MCF 10A (cell line): ENCODE measurements at regions of chr1 and their contacts with region 1.

Region 1: DNA sequence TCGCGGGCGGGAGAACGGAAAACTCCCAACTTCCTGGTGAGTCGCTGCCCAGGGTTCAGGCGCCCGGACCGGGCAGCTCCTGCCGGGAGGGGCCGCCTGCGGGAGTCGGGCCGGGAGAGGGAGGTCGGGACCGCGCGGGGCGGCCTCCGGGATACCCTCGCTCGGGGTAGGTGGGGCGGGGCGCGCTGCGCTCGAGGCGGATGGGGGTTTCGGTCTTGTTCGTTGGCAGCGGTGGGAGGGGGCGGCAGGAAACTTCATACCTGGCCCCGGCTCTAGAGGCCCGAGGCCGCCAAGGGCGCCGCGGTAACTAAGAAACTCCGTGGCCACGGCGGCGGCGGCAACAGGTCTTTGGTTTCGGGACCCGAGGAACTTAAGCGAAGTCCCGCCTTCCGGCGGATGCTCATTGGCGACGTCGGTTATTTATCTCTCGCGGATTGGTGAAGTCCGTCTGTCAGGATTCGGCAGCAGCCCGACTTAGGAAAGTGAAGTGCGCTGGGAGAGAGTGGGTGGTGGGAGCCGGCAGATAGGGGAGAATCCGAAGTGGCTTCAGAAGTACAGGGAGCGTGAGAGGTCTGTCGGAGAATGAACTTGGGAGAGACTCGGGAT is 546 bp downstream of the NEK7 start:
- DNase-seq: peak; percentile 98
- H3K4me3 Mint-ChIP-seq: peak overlapping the region; percentile 85
- H3K27ac Mint-ChIP-seq: peak overlapping the region; percentile 86
- H3K4me1 Mint-ChIP-seq: peaks cover 42% of the 10 kb centered on the region
- H3K27me3 Mint-ChIP-seq: no peaks in the 10 kb centered on the region
- CTCF ChIP-seq: no peak

Region 2: DNA sequence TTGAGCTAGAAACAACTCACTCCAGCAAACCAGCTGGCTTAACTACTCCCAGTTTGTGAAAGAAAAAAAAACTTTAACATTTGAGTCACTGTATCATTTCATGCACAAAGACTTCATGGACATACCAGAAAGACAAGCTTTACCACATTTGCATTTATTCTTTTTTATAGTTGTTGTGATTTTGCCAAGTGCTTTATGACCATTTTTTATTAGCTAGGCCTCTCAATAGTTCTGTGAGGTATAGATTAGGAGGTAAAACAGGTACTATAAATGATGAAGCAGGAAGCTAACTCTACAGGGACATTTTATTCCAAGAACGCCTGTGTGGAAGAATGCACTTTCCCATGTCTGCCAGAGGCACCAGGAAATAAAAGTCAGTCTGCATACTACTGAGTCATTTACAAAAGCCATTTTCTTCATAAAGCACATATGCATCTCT is 373.8 kb before region 1 on chr1:
- CTCF ChIA-PET with region 1: no interaction called
- POLR2A ChIA-PET with region 1: no interaction called
- intact Hi-C with region 1: loop called (anchors 2 kb)
- DNase-seq: no peak
- H3K4me3 Mint-ChIP-seq: no peak overlapping the region
- H3K27ac Mint-ChIP-seq: peak overlapping the region; percentile 52
- H3K4me1 Mint-ChIP-seq: peaks cover 43% of the 10 kb centered on the region
- H3K27me3 Mint-ChIP-seq: no peaks in the 10 kb centered on the region
- CTCF ChIP-seq: no peak

Region 3: GRCh38 chr1:198064201-198064600 is 93.1 kb before region 1 on chr1:
- CTCF ChIA-PET with region 1: interaction called, 3 read pairs
- POLR2A ChIA-PET with region 1: interaction called, 12 read pairs
- intact Hi-C with region 1: no loop called
- DNase-seq: peak; percentile 51
- H3K4me3 Mint-ChIP-seq: no peak overlapping the region
- H3K27ac Mint-ChIP-seq: peak overlapping the region; percentile 80
- H3K4me1 Mint-ChIP-seq: peaks cover 7% of the 10 kb centered on the region
- H3K27me3 Mint-ChIP-seq: no peaks in the 10 kb centered on the region
- CTCF ChIP-seq: no peak

Region 4: GRCh38 chr1:198212637-198213036 is 55.3 kb after region 1 on chr1:
- CTCF ChIA-PET with region 1: interaction called, 3 read pairs
- POLR2A ChIA-PET with region 1: interaction called, 6 read pairs
- intact Hi-C with region 1: loop called (anchors 2 kb)
- DNase-seq: peak; percentile 89
- H3K4me3 Mint-ChIP-seq: no peak overlapping the region
- H3K27ac Mint-ChIP-seq: peak overlapping the region; percentile 5
- H3K4me1 Mint-ChIP-seq: peaks cover 22% of the 10 kb centered on the region
- H3K27me3 Mint-ChIP-seq: no peaks in the 10 kb centered on the region
- CTCF ChIP-seq: no peak

Region 5: GRCh38 chr1:198275597-198275996 is 118.3 kb after region 1 on chr1:
- CTCF ChIA-PET with region 1: interaction called, 4 read pairs
- POLR2A ChIA-PET with region 1: interaction called, 54 read pairs
- intact Hi-C with region 1: loop called (anchors 2 kb)
- DNase-seq: no peak
- H3K4me3 Mint-ChIP-seq: no peak overlapping the region
- H3K27ac Mint-ChIP-seq: no peak overlapping the region
- H3K4me1 Mint-ChIP-seq: peaks cover 5% of the 10 kb centered on the region
- H3K27me3 Mint-ChIP-seq: no peaks in the 10 kb centered on the region
- CTCF ChIP-seq: no peak

Region 6: DNA sequence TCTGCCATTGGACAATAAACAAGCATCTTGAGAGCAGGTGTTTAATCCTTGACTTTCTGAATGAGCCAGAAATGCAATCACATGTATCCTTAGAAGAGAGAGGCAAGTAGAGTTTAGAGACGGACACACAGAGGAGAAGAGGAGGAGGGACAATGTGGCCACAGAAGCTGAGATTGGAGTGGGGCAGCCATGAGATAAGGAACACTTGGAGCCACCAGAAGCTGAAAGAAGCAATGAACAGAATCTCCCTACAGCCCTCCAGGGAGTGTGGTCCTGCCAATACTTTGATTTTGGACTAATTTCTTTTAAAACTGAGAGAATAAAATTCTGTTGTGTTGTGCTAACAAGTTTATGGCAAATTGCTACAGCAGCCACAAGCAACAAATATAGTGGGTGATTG is 242.1 kb after region 1 on chr1:
- CTCF ChIA-PET with region 1: no interaction called
- POLR2A ChIA-PET with region 1: no interaction called
- intact Hi-C with region 1: no loop called
- DNase-seq: no peak
- H3K4me3 Mint-ChIP-seq: no peak overlapping the region
- H3K27ac Mint-ChIP-seq: no peak overlapping the region
- H3K4me1 Mint-ChIP-seq: no peaks in the 10 kb centered on the region
- H3K27me3 Mint-ChIP-seq: no peaks in the 10 kb centered on the region
- CTCF ChIP-seq: no peak

Region 7: GRCh38 chr1:198449727-198450433 is 292.5 kb after region 1 on chr1:
- CTCF ChIA-PET with region 1: interaction called, 3 read pairs
- POLR2A ChIA-PET with region 1: interaction called, 44 read pairs
- intact Hi-C with region 1: no loop called
- DNase-seq: peak; percentile 43
- H3K4me3 Mint-ChIP-seq: peak overlapping the region; percentile 50
- H3K27ac Mint-ChIP-seq: peak overlapping the region; percentile 53
- H3K4me1 Mint-ChIP-seq: peaks cover 22% of the 10 kb centered on the region
- H3K27me3 Mint-ChIP-seq: no peaks in the 10 kb centered on the region
- CTCF ChIP-seq: no peak